ENCODE measurements at regions of chr14 and their contacts with region 1.

Region 1: GRCh38 chr14:100824091-100824551 is 1.8 kb upstream of the MEG3 start:
- DNase-seq: no peak
- H3K4me3 ChIP-seq: no peak overlapping the region
- H3K27ac ChIP-seq: no peak overlapping the region
- H3K4me1 ChIP-seq: peaks cover 3% of the 10 kb centered on the region
- H3K27me3 ChIP-seq: no peaks in the 10 kb centered on the region
- CTCF ChIP-seq: no peak
- POLR2A ChIP-seq: no peak

Region 2: DNA sequence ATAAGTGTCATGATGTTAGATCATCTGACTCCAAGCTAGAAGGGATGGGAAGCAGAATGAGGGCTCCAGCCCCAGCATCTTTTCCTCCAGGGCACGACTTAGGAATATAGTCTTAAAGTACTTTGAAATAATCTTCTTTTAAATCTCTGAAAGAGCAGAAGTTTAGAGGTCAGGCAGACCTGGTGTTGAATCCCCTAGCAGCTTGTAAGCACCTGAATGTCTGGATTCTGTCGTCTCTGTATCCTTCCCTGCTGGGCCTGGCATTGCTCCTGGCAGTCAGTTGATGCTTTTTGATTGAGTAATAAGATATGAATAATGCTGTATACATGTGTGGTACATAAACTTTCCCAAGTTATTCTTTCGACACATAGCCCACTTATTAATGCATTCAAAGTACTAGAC is 727.5 kb before region 1 on chr14:
- intact Hi-C with region 1: no loop called
- DNase-seq: no peak
- H3K4me3 ChIP-seq: no peak overlapping the region
- H3K27ac ChIP-seq: no peak overlapping the region
- H3K4me1 ChIP-seq: no peaks in the 10 kb centered on the region
- H3K27me3 ChIP-seq: no peaks in the 10 kb centered on the region
- CTCF ChIP-seq: no peak
- POLR2A ChIP-seq: no peak

Region 3: GRCh38 chr14:100662879-100663760 is 161.0 kb before region 1 on chr14:
- intact Hi-C with region 1: loop called (anchors 5 kb)
- DNase-seq: peak; percentile 49
- H3K4me3 ChIP-seq: no peak overlapping the region
- H3K27ac ChIP-seq: no peak overlapping the region
- H3K4me1 ChIP-seq: peaks cover 10% of the 10 kb centered on the region
- H3K27me3 ChIP-seq: no peaks in the 10 kb centered on the region
- CTCF ChIP-seq: peak; percentile 84 to 94 (median 89)
- POLR2A ChIP-seq: no peak

Region 4: GRCh38 chr14:101083564-101084435 is 259.7 kb after region 1 on chr14:
- intact Hi-C with region 1: no loop called
- DNase-seq: no peak
- H3K4me3 ChIP-seq: no peak overlapping the region
- H3K27ac ChIP-seq: no peak overlapping the region
- H3K4me1 ChIP-seq: no peaks in the 10 kb centered on the region
- H3K27me3 ChIP-seq: no peaks in the 10 kb centered on the region
- CTCF ChIP-seq: no peak
- POLR2A ChIP-seq: no peak

Measured in prostate gland (tissue), 2 donors.